Cardiac septum (tissue), 1 donor: ENCODE measurements at regions of chr17 and their contacts with region 1.

Region 1: DNA sequence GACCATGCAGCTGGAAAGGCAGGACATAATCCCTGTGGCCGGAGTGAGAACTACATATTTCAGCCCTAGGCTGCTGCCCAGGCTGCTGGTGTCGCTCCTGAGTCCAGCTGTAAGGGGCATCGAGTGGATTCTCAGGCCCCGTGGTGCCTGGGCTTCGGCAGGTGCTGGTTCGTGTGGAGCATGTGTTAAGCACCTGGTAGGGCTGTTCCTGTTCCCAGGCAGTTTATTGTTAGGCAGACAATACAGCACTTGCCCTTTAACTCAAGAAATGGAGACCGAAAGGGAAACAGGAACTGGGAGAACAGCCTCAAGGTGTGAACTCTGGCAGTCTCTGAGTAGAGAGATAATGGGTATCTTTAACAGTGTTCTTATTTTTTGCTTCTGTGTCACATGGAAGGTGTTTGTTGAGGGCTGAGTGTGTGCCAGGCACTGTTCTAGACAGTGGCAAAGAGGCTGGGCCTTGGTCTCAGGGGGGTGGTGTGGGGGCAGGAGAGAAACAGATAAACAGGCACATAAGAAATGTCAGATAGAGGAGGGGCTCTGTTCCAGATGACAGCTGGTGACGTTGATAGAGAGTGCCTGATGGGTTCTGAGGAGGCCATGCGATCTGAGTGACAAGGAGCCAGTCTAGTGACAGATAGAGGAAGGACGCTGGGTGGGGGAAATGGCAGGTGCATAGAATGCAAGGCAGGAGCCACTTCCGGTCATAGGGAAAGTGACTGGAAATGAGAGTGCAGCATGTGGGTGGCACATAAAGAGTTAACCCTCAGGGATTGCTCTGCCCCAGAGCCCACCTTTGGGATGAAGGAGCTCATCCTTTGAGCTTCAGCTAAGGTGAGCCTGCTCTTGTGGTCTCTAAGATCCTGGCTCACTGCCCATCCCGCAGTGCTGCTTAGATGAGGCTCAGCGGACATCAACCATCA is 33.8 kb downstream of the EPN2 start:
- DNase-seq: no peak

Region 2: GRCh38 chr17:19019036-19019941 is 251.7 kb before region 1 on chr17:
- intact Hi-C with region 1: no loop called
- DNase-seq: peak; percentile 66

Region 3: GRCh38 chr17:19317359-19318095 is 46.6 kb after region 1 on chr17:
- intact Hi-C with region 1: loop called (anchors 5 kb)
- DNase-seq: peak; percentile 87

Region 4: DNA sequence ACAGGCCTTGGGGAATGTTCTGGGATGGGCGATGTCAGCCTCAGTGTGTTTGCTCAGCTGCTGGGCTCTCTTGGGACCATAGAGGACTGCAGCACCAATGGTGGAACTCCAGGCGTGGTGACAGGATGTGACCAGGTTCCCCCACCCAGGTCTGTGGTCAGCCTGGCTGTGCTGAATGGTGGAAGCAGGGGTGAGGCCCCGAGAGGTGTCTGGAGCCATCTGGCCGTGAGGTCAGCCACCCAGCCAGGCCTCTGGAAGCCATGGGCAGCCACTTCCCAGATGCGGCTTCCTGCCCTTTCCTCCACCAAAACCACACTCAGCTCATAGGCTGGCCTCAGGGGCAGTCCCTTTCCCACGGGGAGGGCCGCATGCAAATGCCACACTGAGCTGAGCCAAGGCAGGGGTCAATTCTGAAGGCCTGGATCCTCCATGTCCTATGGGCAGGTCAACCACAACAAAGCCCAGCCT is 99.6 kb after region 1 on chr17:
- intact Hi-C with region 1: no loop called
- DNase-seq: no peak